Left ventricle myocardium inferior (tissue), 1 donor: ENCODE measurements at regions of chr3 and their contacts with region 1.

Region 1: GRCh38 chr3:194265483-194265892 is 85.6 kb downstream of the CPN2 start:
- DNase-seq: peak; percentile 93
- H3K4me3 ChIP-seq: peak overlapping the region; percentile 36
- H3K27ac ChIP-seq: peak overlapping the region; percentile 96
- H3K4me1 ChIP-seq: peaks cover 65% of the 10 kb centered on the region
- H3K27me3 ChIP-seq: no peaks in the 10 kb centered on the region
- CTCF ChIP-seq: no peak

Region 2: DNA sequence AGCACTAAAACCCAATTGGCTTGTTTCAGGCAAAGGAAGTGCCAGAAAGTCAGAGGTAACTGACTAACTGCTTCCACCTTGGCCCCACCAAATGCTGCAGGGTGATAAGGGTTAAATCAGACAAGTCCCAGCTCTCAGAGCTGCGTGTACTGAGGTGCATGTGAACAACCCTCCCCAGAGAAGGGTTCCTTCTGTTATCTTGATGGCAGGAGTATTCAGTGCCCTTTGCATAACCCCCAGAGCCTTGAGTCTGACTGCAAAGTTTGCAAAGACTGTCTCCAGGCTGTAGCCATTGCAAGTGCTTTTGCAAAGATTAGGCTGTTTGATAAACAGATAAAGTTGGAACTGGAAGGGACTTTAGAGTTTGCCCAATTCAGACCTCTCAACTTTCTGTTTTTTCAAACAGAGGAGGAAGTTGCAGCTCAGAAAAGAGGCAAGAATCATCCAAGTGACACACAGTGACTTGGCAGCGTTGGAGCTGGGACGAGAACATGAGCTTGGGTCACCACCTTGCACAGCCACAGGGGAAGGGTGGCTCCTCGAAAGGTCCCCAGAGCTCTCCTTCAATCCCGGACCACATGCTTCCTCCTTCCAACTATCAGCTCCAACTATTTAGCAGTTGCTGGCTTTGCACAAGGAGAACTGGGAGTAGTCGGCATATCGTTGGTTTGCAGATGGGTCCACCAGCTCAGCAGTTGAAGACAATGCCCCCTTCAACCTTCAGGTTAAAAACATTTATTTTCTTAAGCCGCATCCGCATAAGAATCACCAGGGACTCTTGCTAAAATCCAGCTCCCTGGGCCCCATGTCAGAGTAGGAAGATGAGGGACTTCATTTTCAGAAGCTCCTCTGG is 354.4 kb before region 1 on chr3:
- intact Hi-C with region 1: no loop called
- DNase-seq: no peak
- H3K4me3 ChIP-seq: no peak overlapping the region
- H3K27ac ChIP-seq: no peak overlapping the region
- H3K4me1 ChIP-seq: peaks cover 10% of the 10 kb centered on the region
- H3K27me3 ChIP-seq: peaks cover 8% of the 10 kb centered on the region
- CTCF ChIP-seq: no peak

Region 3: GRCh38 chr3:194141415-194142155 is 123.9 kb before region 1 on chr3:
- intact Hi-C with region 1: loop called (anchors 5 kb)
- DNase-seq: peak; percentile 94
- H3K4me3 ChIP-seq: peak overlapping the region; percentile 63
- H3K27ac ChIP-seq: peak overlapping the region; percentile 99
- H3K4me1 ChIP-seq: peaks cover 73% of the 10 kb centered on the region
- H3K27me3 ChIP-seq: no peaks in the 10 kb centered on the region
- CTCF ChIP-seq: peak; percentile 15

Region 4: GRCh38 chr3:194369525-194370279 is 104.2 kb after region 1 on chr3 and contains the start of gene LRRC15:
- intact Hi-C with region 1: no loop called
- DNase-seq: no peak
- H3K4me3 ChIP-seq: no peak within 1 kb of the TSS
- H3K27ac ChIP-seq: no peak within 1 kb of the TSS
- H3K4me1 ChIP-seq: peaks cover 10% of the 10 kb centered on the region
- H3K27me3 ChIP-seq: peaks cover 59% of the 10 kb centered on the region
- CTCF ChIP-seq: no peak
- total RNA-seq, gene LRRC15: 0.14 TPM